IMR-90 (cell line): ENCODE measurements at regions of chr5 and their contacts with region 1.

Region 1: GRCh38 chr5:66609615-66610014 is 13.4 kb downstream of the MAST4 start:
- DNase-seq: no peak
- ATAC-seq: no peak
- H3K4me3 ChIP-seq: no peak overlapping the region
- H3K27ac ChIP-seq: no peak overlapping the region
- H3K4me1 ChIP-seq: no peaks in the 10 kb centered on the region
- H3K27me3 ChIP-seq: no peaks in the 10 kb centered on the region; the same call in 1 of the 2 replicates
- CTCF ChIP-seq: no peak
- POLR2A ChIP-seq: no peak
- RAD21 ChIP-seq: no peak

Region 2: GRCh38 chr5:66717455-66718373 is 108.1 kb after region 1 on chr5:
- CTCF ChIA-PET with region 1: no interaction called
- POLR2A ChIA-PET with region 1: no interaction called
- dilution Hi-C with region 1: no loop called
- in situ Hi-C with region 1: no loop called
- intact Hi-C with region 1: loop called (anchors 5 kb)
- DNase-seq: no peak
- ATAC-seq: no peak
- H3K4me3 ChIP-seq: no peak overlapping the region
- H3K27ac ChIP-seq: no peak overlapping the region
- H3K4me1 ChIP-seq: no peaks in the 10 kb centered on the region
- H3K27me3 ChIP-seq: no peaks in the 10 kb centered on the region
- CTCF ChIP-seq: no peak
- POLR2A ChIP-seq: no peak
- RAD21 ChIP-seq: no peak